ENCODE measurements at regions of chr14 and their contacts with region 1.

Region 1: DNA sequence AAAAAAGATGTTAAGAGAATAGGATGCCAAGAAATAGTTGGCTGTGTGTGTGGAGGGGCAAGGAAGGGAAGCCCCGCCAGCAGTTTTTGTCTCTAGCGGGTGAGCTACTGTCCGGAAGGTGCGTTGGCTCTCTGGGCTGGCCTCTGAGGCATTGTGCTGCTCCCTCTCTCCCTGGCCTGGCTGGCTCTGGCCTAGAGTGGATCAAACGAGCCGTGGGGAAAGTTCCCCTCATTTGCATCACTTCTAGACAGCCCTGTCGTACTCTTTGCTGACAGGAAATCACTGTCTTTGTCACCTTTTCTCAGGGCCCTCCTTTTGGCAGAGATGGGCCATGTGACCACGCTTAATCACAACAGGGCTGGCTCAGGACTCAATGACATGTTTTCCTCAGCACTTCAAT is 236.1 kb upstream of the NPAS3 start:
- DNase-seq: peak; percentile 21 to 88 (median 56)

Region 2: GRCh38 chr14:32934073-32934890 is 231.7 kb after region 1 on chr14:
- intact Hi-C with region 1: loop called (anchors 5 kb)
- DNase-seq: peak; percentile 41 to 88 (median 73)

Measured in head of caudate nucleus (tissue), 42 donors.